Activated CD4-positive, alpha-beta T cell treated with anti-CD3 and anti-CD28 coated beads for 36 hours (primary cell): ENCODE measurements at regions of chr3 and their contacts with region 1.

Region 1: GRCh38 chr3:108589146-108589997 is at the starts of genes CIP2A and DZIP3:
- DNase-seq: peak; percentile 90
- ATAC-seq: peak; percentile 87
- H3K4me3 Mint-ChIP-seq: peak within 1 kb of the TSS; percentile 82
- H3K27ac Mint-ChIP-seq: peak within 1 kb of the TSS; percentile 97
- H3K4me1 Mint-ChIP-seq: peaks cover 33% of the 10 kb centered on the region
- H3K27me3 Mint-ChIP-seq: no peaks in the 10 kb centered on the region
- total RNA-seq, gene CIP2A: 47.8 to 58.5 TPM
- total RNA-seq, gene DZIP3: 11.9 to 12.9 TPM

Region 2: DNA sequence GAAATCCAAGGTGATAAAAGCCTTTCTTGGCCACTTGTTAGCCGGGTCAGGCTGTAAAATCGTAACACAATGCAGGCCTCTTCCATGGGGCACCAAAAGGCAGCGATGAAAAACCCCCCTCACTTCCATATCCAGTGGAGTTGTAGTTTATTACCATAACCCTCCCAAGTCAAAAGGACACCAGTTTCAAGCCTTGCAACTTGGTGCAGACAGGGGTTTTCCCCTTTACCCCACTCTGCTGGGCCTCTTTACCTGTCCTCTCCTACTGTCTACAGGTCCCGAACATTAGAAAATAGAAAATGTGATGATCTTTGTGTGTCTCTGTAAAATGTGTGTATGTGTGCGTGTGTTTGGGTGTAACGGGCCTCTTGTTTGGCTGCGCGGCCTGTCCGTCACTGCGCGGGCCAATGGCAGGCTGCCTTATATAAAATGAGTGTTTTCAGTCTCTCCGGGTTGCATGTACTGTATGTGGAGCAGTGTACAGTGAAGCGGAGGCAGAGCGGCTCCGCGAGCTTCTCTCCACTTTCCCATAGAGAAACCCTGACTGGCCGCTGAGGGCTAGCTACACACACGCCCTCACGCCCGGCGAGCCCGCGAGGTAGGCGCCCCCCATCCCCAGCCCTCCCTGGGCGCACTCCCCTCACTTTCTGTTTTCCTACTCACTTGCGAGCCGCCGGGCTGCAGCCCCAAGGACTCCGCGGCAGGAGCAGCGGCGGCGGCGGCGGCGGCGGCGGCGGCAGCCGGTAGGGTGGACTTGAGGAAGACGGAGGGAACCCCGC is 1066.7 kb before region 1 on chr3 and contains the start of gene BBX:
- CTCF ChIA-PET with region 1: no interaction called
- POLR2A ChIA-PET with region 1: no interaction called
- intact Hi-C with region 1: loop called in 1 of 2 experiments (anchors 5 kb)
- DNase-seq: peak; percentile 91
- ATAC-seq: peak; percentile 93
- H3K4me3 Mint-ChIP-seq: peak within 1 kb of the TSS; percentile 97
- H3K27ac Mint-ChIP-seq: peak within 1 kb of the TSS; percentile 95
- H3K4me1 Mint-ChIP-seq: peaks cover 25% of the 10 kb centered on the region
- H3K27me3 Mint-ChIP-seq: no peaks in the 10 kb centered on the region
- total RNA-seq, gene BBX: 38.9 to 63.4 TPM

Region 3: GRCh38 chr3:108301695-108302404 is 287.5 kb before region 1 on chr3:
- CTCF ChIA-PET with region 1: no interaction called
- POLR2A ChIA-PET with region 1: no interaction called
- intact Hi-C with region 1: loop called in 1 of 2 experiments (anchors 10 kb)
- DNase-seq: peak; percentile 33
- ATAC-seq: peak; percentile 86
- H3K4me3 Mint-ChIP-seq: peak overlapping the region; percentile 45
- H3K27ac Mint-ChIP-seq: peak overlapping the region; percentile 83
- H3K4me1 Mint-ChIP-seq: peaks cover 43% of the 10 kb centered on the region
- H3K27me3 Mint-ChIP-seq: peaks cover 2% of the 10 kb centered on the region

Region 4: DNA sequence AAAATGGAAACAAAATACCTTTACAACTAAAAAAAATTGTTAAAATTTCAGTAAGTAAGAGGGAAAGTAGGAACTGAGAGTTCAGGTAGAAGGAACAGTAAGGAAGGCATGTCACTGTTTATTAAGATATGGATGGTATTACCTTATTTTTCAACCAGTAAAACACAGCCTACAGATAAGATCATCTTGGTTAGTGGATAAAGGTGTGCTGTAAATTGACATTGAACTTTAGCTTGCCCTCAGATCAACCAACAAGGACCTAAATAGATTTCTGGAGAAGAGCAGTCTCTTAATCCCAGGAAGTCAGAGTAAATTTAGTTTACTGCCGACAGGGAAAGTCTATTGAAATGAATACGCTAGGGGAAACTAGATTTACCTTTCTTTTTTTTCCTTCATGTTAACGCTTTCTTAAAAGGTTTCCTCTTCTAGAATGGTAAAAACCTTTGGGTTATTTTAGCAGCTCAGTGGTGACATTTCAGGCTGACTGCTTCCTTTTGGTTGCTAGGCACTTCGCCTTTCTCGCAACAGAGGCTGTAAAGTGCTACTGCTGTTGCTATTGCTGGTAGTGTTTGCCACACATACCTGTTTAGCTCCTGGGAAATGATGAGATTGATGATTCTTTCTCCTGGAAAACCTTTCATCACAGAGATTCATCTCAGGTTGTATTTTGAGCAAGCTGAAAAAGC is 13.0 kb after region 1 on chr3:
- CTCF ChIA-PET with region 1: interaction called, 15 read pairs
- POLR2A ChIA-PET with region 1: interaction called, 24 read pairs
- intact Hi-C with region 1: loop called (anchors 1 kb)
- DNase-seq: peak; percentile 48
- ATAC-seq: peak; percentile 74
- H3K4me3 Mint-ChIP-seq: peak overlapping the region; percentile 46
- H3K27ac Mint-ChIP-seq: peak overlapping the region; percentile 69
- H3K4me1 Mint-ChIP-seq: peaks cover 54% of the 10 kb centered on the region
- H3K27me3 Mint-ChIP-seq: no peaks in the 10 kb centered on the region

Region 5: DNA sequence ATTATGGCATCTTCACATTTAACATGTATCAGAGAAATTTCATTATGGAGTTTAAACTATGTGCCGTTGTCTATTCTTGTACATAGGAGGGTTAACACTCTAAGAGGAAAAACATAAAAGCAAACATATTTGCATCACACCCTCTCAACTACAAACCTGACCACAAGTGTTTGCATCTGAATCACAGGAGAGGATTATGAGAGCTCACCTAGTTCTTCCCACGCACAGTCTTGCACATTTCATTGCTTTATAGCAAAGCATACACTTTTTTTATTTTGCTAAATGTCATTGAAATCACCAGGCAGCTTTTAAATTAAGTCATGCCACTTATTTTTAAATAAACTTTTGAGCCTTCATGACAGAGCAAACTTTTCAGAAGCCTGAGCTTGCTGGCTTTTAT is 245.7 kb after region 1 on chr3:
- CTCF ChIA-PET with region 1: no interaction called
- POLR2A ChIA-PET with region 1: interaction called, 3 read pairs
- intact Hi-C with region 1: loop called in 1 of 2 experiments (anchors 1 kb)
- DNase-seq: peak; percentile 63
- ATAC-seq: peak; percentile 67
- H3K4me3 Mint-ChIP-seq: peak overlapping the region; percentile 74
- H3K27ac Mint-ChIP-seq: peak overlapping the region; percentile 92
- H3K4me1 Mint-ChIP-seq: peaks cover 84% of the 10 kb centered on the region
- H3K27me3 Mint-ChIP-seq: no peaks in the 10 kb centered on the region